Psoas muscle (tissue), 8 donors: ENCODE measurements at regions of chr10 and their contacts with region 1.

Region 1: GRCh38 chr10:103685880-103686669 is 169.3 kb downstream of the SH3PXD2A start:
- DNase-seq: peak; percentile 77 to 91
- ATAC-seq: peak; percentile 90 to 94 (median 92)
- H3K4me3 ChIP-seq: no peak overlapping the region
- H3K27ac ChIP-seq: no peak overlapping the region
- H3K4me1 ChIP-seq: peaks cover 9% of the 10 kb centered on the region
- H3K27me3 ChIP-seq: no peaks in the 10 kb centered on the region
- CTCF ChIP-seq: peak; percentile 97

Region 2: GRCh38 chr10:103598654-103599115 is 87.4 kb before region 1 on chr10:
- intact Hi-C with region 1: loop called in 1 of 2 experiments (anchors 1 kb)
- DNase-seq: peak; percentile 50 to 72
- ATAC-seq: peak; percentile 62 to 89 (median 78)
- H3K4me3 ChIP-seq: no peak overlapping the region
- H3K27ac ChIP-seq: no peak overlapping the region
- H3K4me1 ChIP-seq: no peaks in the 10 kb centered on the region
- H3K27me3 ChIP-seq: no peaks in the 10 kb centered on the region
- CTCF ChIP-seq: peak; percentile 67

Region 3: GRCh38 chr10:103605359-103606095 is 80.5 kb before region 1 on chr10:
- intact Hi-C with region 1: loop called in 1 of 2 experiments (anchors 2 kb)
- DNase-seq: peak; percentile 55 to 68
- ATAC-seq: peak; percentile 64 to 92 (median 84)
- H3K4me3 ChIP-seq: no peak overlapping the region
- H3K27ac ChIP-seq: no peak overlapping the region
- H3K4me1 ChIP-seq: peaks cover 4% of the 10 kb centered on the region
- H3K27me3 ChIP-seq: no peaks in the 10 kb centered on the region
- CTCF ChIP-seq: peak; percentile 75